OCI-LY7 (cell line): ENCODE measurements at regions of chr3 and their contacts with region 1.

Region 1: GRCh38 chr3:152222327-152222726 is 46.4 kb upstream of the MBNL1 start:
- DNase-seq: no peak
- H3K4me3 ChIP-seq: no peak overlapping the region
- H3K27ac ChIP-seq: no peak overlapping the region
- H3K4me1 ChIP-seq: peaks cover 12% of the 10 kb centered on the region
- CTCF ChIP-seq: no peak

Region 2: DNA sequence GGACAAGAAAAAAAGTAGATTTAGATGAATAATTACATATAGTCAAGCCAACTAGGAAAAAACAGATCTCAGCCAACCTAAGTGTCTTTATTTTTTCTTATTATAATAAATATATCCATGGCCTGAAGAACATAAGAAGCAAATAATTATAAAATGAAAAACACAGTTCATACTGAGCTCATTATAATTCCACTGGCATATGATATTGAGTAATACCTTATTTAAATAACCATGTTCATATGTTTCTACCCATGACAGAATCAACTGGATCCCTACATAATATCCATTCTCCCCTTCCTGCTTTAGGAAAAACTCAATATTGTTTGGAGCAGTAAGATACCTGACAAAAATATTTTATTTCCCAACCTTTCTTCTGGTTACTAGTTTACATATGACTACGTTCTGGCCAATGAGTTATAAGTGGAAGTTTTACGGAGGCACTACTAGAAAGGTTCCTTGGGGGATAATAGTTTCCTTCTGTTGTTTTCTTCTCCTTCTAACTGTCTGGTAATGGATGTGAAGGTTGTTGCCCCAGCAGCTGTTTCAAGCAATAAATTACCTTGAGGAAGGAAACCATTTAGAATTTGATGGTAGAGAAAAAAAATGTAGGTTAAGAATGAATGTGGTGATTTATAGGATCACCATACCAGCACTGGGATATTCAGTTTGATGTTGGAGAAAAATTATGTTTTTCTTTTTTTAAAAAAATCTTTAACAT is 137.7 kb before region 1 on chr3:
- CTCF ChIA-PET with region 1: no interaction called
- POLR2A ChIA-PET with region 1: no interaction called
- intact Hi-C with region 1: no loop called
- DNase-seq: no peak
- H3K4me3 ChIP-seq: no peak overlapping the region
- H3K27ac ChIP-seq: no peak overlapping the region
- H3K4me1 ChIP-seq: no peaks in the 10 kb centered on the region
- CTCF ChIP-seq: no peak

Region 3: GRCh38 chr3:152232679-152233078 is 10.4 kb after region 1 on chr3:
- CTCF ChIA-PET with region 1: no interaction called
- POLR2A ChIA-PET with region 1: interaction called, 18 read pairs
- intact Hi-C with region 1: no loop called
- DNase-seq: no peak
- H3K4me3 ChIP-seq: no peak overlapping the region
- H3K27ac ChIP-seq: no peak overlapping the region
- H3K4me1 ChIP-seq: peaks cover 6% of the 10 kb centered on the region
- CTCF ChIP-seq: no peak

Region 4: DNA sequence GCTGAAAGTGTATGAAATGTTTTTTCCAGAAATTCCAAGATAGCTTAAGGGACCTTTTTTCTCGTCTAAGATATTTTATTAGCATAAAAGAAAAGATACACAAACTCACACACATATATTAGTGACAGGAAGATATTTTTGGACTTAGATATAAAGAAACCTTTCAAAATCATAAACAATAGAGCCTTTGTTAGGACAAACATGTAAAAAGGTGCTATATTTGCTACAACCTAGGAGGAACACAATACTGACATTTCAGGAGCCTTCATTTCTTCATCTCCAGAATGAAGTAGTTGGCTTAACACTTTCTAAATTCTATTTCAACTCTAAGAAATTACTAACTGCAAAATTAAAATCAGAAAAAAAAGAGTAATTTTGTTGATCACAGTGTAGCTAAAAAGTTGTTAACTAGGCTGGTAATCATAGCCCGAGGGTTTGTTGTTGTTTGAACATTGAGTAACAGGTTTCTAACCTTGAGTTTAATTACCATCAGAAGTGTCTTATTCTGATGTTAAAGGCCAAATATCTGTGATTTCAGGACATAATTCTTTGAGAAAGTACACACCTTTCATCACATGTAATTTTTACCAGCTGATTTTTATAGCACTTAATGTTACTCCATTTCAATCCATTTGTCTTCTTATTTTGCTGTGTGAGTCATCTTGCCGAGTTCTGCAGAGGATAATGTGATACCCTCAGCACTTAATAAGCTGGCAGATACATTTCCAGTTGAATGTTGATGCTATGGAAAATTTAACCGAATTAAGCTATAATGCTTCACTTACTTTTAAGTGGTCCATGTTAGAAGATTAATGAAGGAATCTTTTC is 143.7 kb after region 1 on chr3:
- CTCF ChIA-PET with region 1: no interaction called
- POLR2A ChIA-PET with region 1: no interaction called
- intact Hi-C with region 1: no loop called
- DNase-seq: no peak
- H3K4me3 ChIP-seq: no peak overlapping the region
- H3K27ac ChIP-seq: no peak overlapping the region
- H3K4me1 ChIP-seq: peaks cover 10% of the 10 kb centered on the region
- CTCF ChIP-seq: no peak